ENCODE measurements at regions of chr20 and their contacts with region 1.

Region 1: DNA sequence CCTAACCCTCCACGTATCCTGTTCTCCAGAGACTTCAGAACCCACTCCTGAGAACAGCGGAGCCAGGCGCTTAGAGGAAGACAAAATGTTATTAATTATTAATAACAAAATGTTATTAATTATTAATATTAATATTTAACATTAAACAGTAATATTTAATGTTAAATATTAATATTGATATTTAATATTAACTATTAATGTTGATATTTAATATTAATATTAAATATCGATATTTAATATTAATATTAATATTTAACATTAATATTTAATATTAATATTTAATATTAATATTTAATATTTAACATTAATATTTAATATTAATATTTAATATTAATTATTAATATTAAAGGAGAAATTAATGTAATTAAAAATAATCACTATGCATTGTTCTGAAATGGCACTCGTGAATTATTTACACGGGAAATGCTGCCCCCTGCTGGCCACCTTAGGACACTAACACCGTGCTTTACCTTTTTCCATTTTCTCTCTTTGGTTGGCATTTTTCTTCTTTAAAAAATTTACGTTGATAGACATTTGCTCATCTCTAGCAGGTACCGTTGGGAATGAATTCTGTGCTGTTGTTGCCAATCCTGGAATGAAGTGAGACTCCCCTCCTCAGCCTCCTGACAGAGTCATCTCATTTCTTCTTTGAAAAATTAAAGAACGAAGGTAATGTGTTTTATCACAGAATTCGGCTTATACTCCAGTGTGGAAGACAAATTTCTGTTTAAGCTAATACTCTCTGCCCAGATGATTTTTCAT is 7.5 kb upstream of the GGTLC1 start:
- DNase-seq: peak; percentile 65
- H3K4me3 Mint-ChIP-seq: no peak overlapping the region
- H3K27ac Mint-ChIP-seq: no peak overlapping the region
- H3K4me1 Mint-ChIP-seq: peaks cover 2% of the 10 kb centered on the region
- H3K27me3 Mint-ChIP-seq: no peaks in the 10 kb centered on the region

Region 2: DNA sequence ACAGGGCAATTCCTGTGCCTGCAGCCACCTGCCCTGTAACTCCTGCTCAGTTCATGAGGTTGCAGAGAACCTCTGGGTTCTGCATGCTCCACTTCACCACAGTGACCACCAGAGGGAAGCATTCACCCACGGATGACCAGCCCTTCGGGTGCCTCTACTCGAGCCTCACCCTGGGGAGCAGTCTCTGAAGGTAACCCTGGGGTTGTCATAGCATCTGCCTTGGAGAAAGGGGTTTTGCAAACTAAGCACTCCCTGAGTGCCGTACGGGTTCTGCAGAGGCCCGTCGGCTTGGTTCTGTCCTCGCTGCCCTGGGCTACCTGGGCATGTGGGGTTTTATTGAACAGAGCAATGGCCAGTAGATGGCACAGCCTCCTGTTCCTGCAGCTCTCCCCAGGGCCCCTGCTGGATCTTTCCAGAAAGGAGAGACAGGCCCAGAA is 106.3 kb before region 1 on chr20:
- CTCF ChIA-PET with region 1: no interaction called
- POLR2A ChIA-PET with region 1: no interaction called
- intact Hi-C with region 1: loop called (anchors 5 kb)
- DNase-seq: peak; percentile 71
- H3K4me3 Mint-ChIP-seq: no peak overlapping the region
- H3K27ac Mint-ChIP-seq: no peak overlapping the region
- H3K4me1 Mint-ChIP-seq: no peaks in the 10 kb centered on the region
- H3K27me3 Mint-ChIP-seq: peaks cover 3% of the 10 kb centered on the region

Region 3: GRCh38 chr20:23920417-23921325 is 75.4 kb before region 1 on chr20:
- CTCF ChIA-PET with region 1: no interaction called
- POLR2A ChIA-PET with region 1: no interaction called
- intact Hi-C with region 1: no loop called
- DNase-seq: no peak
- H3K4me3 Mint-ChIP-seq: no peak overlapping the region
- H3K27ac Mint-ChIP-seq: no peak overlapping the region
- H3K4me1 Mint-ChIP-seq: peaks cover 15% of the 10 kb centered on the region
- H3K27me3 Mint-ChIP-seq: no peaks in the 10 kb centered on the region

Region 4: GRCh38 chr20:23937303-23938117 is 58.6 kb before region 1 on chr20:
- CTCF ChIA-PET with region 1: interaction called, 7 read pairs
- POLR2A ChIA-PET with region 1: no interaction called
- intact Hi-C with region 1: loop called (anchors 5 kb)
- DNase-seq: peak; percentile 70
- H3K4me3 Mint-ChIP-seq: no peak overlapping the region
- H3K27ac Mint-ChIP-seq: no peak overlapping the region
- H3K4me1 Mint-ChIP-seq: no peaks in the 10 kb centered on the region
- H3K27me3 Mint-ChIP-seq: no peaks in the 10 kb centered on the region

Region 5: GRCh38 chr20:24060851-24061590 is 64.9 kb after region 1 on chr20:
- CTCF ChIA-PET with region 1: no interaction called
- POLR2A ChIA-PET with region 1: no interaction called
- intact Hi-C with region 1: no loop called
- DNase-seq: no peak
- H3K4me3 Mint-ChIP-seq: no peak overlapping the region
- H3K27ac Mint-ChIP-seq: no peak overlapping the region
- H3K4me1 Mint-ChIP-seq: peaks cover 6% of the 10 kb centered on the region
- H3K27me3 Mint-ChIP-seq: peaks cover 2% of the 10 kb centered on the region

Region 6: GRCh38 chr20:24118441-24119175 is 122.5 kb after region 1 on chr20:
- CTCF ChIA-PET with region 1: no interaction called
- POLR2A ChIA-PET with region 1: no interaction called
- intact Hi-C with region 1: no loop called
- DNase-seq: no peak
- H3K4me3 Mint-ChIP-seq: no peak overlapping the region
- H3K27ac Mint-ChIP-seq: no peak overlapping the region
- H3K4me1 Mint-ChIP-seq: no peaks in the 10 kb centered on the region
- H3K27me3 Mint-ChIP-seq: peaks cover 17% of the 10 kb centered on the region

Measured in activated CD4-positive, alpha-beta memory T cell treated with anti-CD3 and anti-CD28 coated beads for 36 hours (primary cell).